B cell (primary cell): ENCODE measurements at regions of chr18 and their contacts with region 1.

Region 1: DNA sequence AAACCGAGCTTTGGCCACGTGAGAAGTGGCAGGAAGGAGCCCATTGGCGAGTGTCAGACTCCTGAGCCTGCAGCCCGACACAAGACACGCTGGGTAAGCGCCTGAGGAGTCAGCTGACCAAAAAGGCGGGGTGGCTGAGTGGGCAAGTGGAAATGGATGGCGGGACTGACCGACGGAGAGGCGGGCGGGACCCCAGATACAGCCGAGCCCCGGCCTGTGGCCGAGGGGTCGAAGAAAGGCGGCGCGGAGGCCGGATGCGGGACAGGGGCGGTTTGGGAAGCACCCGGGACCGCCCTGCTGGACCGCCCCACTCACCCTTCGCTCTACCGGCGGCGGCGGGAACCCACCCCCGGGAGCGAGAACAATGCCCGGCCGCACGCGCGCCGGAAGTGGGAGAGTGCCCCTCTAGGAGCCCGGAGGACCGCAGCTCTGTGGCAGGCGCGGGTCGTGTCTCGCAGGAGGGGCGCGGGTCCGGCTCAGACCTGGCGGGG is 22.8 kb downstream of the ZSCAN30 start:
- DNase-seq: peak; percentile 84
- ATAC-seq: peak; percentile 85
- H3K4me3 ChIP-seq: peak overlapping the region; percentile 34 to 79 (median 76)
- H3K4me3 Mint-ChIP-seq: peak overlapping the region; percentile 95
- H3K27ac ChIP-seq: peak overlapping the region; percentile 81 to 93
- H3K27ac Mint-ChIP-seq: peak overlapping the region; percentile 95
- H3K4me1 ChIP-seq: peaks cover 18 to 23% of the 10 kb centered on the region in 2 donors
- H3K4me1 Mint-ChIP-seq: peaks cover 31% of the 10 kb centered on the region
- H3K27me3 ChIP-seq: no peaks in the 10 kb centered on the region
- H3K27me3 Mint-ChIP-seq: no peaks in the 10 kb centered on the region
- CTCF ChIP-seq: no peak

Region 2: GRCh38 chr18:35240664-35241447 is 26.4 kb before region 1 on chr18 and contains the start of gene ZNF397:
- CTCF ChIA-PET with region 1: interaction called, 4 read pairs
- POLR2A ChIA-PET with region 1: interaction called, 15 read pairs
- intact Hi-C with region 1: loop called (anchors 1 kb)
- DNase-seq: peak; percentile 97
- ATAC-seq: peak; percentile 98
- H3K4me3 ChIP-seq: peak within 1 kb of the TSS; percentile 79 to 95 (median 91)
- H3K4me3 Mint-ChIP-seq: peak within 1 kb of the TSS; percentile 91
- H3K27ac ChIP-seq: peak within 1 kb of the TSS; percentile 97
- H3K27ac Mint-ChIP-seq: peak within 1 kb of the TSS; percentile 99
- H3K4me1 ChIP-seq: peaks cover 10 to 12% of the 10 kb centered on the region in 2 donors
- H3K4me1 Mint-ChIP-seq: peaks cover 29% of the 10 kb centered on the region
- H3K27me3 ChIP-seq: no peaks in the 10 kb centered on the region
- H3K27me3 Mint-ChIP-seq: no peaks in the 10 kb centered on the region
- CTCF ChIP-seq: no peak
- total RNA-seq, gene ZNF397: 63.0 and 67.2 TPM in 2 replicates

Region 3: GRCh38 chr18:35247444-35248249 is 19.6 kb before region 1 on chr18:
- CTCF ChIA-PET with region 1: interaction called, 5 read pairs
- POLR2A ChIA-PET with region 1: no interaction called
- intact Hi-C with region 1: loop called (anchors 2 kb)
- DNase-seq: peak; percentile 78
- ATAC-seq: peak; percentile 93
- H3K4me3 ChIP-seq: peak overlapping the region in 1 of 5 experiments; percentile 18
- H3K4me3 Mint-ChIP-seq: peak overlapping the region; percentile 73
- H3K27ac ChIP-seq: peak overlapping the region; percentile 0 to 66
- H3K27ac Mint-ChIP-seq: peak overlapping the region; percentile 91
- H3K4me1 ChIP-seq: peaks cover 24 to 26% of the 10 kb centered on the region in 2 donors
- H3K4me1 Mint-ChIP-seq: peaks cover 39% of the 10 kb centered on the region
- H3K27me3 ChIP-seq: no peaks in the 10 kb centered on the region
- H3K27me3 Mint-ChIP-seq: no peaks in the 10 kb centered on the region
- CTCF ChIP-seq: no peak

Region 4: GRCh38 chr18:35290073-35290735 is 23.0 kb after region 1 on chr18 and contains the start of gene ZSCAN30:
- CTCF ChIA-PET with region 1: interaction called, 9 read pairs
- POLR2A ChIA-PET with region 1: interaction called, 14 read pairs
- intact Hi-C with region 1: loop called (anchors 1 kb)
- DNase-seq: peak; percentile 97
- ATAC-seq: peak; percentile 99
- H3K4me3 ChIP-seq: peak within 1 kb of the TSS; percentile 85 to 94 (median 90)
- H3K4me3 Mint-ChIP-seq: peak within 1 kb of the TSS; percentile 100
- H3K27ac ChIP-seq: peak within 1 kb of the TSS; percentile 80 to 86
- H3K27ac Mint-ChIP-seq: peak within 1 kb of the TSS; percentile 98
- H3K4me1 ChIP-seq: peaks cover 14 to 16% of the 10 kb centered on the region in 2 donors
- H3K4me1 Mint-ChIP-seq: peaks cover 45% of the 10 kb centered on the region
- H3K27me3 ChIP-seq: no peaks in the 10 kb centered on the region
- H3K27me3 Mint-ChIP-seq: no peaks in the 10 kb centered on the region
- CTCF ChIP-seq: no peak
- total RNA-seq, gene ZSCAN30: 32.0 and 37.3 TPM in 2 replicates

Region 5: GRCh38 chr18:35355140-35355618 is 88.0 kb after region 1 on chr18:
- CTCF ChIA-PET with region 1: interaction called, 12 read pairs
- POLR2A ChIA-PET with region 1: no interaction called
- intact Hi-C with region 1: no loop called
- DNase-seq: peak; percentile 85
- ATAC-seq: peak; percentile 99
- H3K4me3 ChIP-seq: no peak overlapping the region
- H3K4me3 Mint-ChIP-seq: no peak overlapping the region
- H3K27ac ChIP-seq: no peak overlapping the region
- H3K27ac Mint-ChIP-seq: no peak overlapping the region
- H3K4me1 ChIP-seq: no peaks in the 10 kb centered on the region
- H3K4me1 Mint-ChIP-seq: no peaks in the 10 kb centered on the region
- H3K27me3 ChIP-seq: no peaks in the 10 kb centered on the region
- H3K27me3 Mint-ChIP-seq: no peaks in the 10 kb centered on the region
- CTCF ChIP-seq: peak; percentile 76

Region 6: DNA sequence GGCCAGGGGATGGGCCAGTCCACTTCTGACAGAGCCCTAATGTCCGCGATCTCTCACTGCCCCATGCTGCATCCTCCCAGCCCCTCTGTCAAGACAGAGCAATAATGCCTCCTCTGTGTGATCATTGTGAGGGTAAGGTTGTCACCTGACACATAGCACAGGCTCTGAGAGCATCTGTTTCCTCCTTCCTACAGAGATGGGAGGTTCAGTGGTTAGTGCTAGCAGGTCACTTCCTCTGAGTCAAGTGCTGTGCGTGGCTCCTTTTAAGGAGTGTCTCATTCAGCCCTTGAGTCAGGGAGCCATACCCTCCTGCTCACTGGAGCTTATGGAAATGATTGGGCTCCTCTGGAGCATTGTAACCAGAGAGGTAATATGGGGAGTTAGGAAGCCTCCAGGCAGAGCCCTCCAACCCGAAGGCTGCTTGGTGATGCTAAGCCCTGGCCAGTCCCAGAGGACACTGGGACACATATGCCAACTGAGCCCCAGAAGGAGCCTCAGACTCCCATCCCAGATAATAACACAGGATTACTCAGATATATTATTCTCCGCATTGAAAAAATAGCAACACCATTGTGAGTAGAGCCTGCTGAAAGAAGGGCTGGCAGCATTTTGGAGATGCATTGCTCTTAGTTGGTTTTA is 503.3 kb after region 1 on chr18:
- CTCF ChIA-PET with region 1: no interaction called
- POLR2A ChIA-PET with region 1: no interaction called
- intact Hi-C with region 1: no loop called
- DNase-seq: no peak
- ATAC-seq: peak; percentile 31
- H3K4me3 ChIP-seq: no peak overlapping the region
- H3K4me3 Mint-ChIP-seq: no peak overlapping the region
- H3K27ac ChIP-seq: no peak overlapping the region
- H3K27ac Mint-ChIP-seq: no peak overlapping the region
- H3K4me1 ChIP-seq: peaks cover 0 to 9% of the 10 kb centered on the region in 2 donors
- H3K4me1 Mint-ChIP-seq: peaks cover 6% of the 10 kb centered on the region
- H3K27me3 ChIP-seq: no peaks in the 10 kb centered on the region
- H3K27me3 Mint-ChIP-seq: peaks cover 13% of the 10 kb centered on the region
- CTCF ChIP-seq: no peak

Region 7: DNA sequence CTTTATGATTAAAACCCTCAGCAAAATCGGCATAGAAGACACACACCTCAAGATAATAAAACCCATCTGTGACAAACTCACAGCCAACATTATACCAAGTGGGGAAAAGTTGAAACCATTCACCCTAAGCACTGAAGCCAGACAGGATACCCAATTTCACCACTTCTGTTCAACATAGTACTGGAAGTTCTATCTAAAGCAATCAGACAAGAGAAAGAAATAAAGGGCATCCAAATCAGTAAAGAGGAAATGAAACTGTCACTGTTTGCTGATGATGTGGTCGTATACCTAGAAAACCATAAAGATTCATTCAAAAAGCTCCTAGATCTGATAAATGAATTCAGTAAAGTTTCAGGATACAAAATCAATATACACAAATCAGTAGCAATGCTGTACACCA is 816.5 kb after region 1 on chr18:
- CTCF ChIA-PET with region 1: no interaction called
- POLR2A ChIA-PET with region 1: no interaction called
- intact Hi-C with region 1: no loop called
- DNase-seq: peak; percentile 64
- ATAC-seq: peak; percentile 47
- H3K4me3 ChIP-seq: no peak overlapping the region
- H3K4me3 Mint-ChIP-seq: peak overlapping the region; percentile 29
- H3K27ac ChIP-seq: no peak overlapping the region
- H3K27ac Mint-ChIP-seq: peak overlapping the region; percentile 64
- H3K4me1 ChIP-seq: peaks cover 8 to 14% of the 10 kb centered on the region in 2 donors
- H3K4me1 Mint-ChIP-seq: peaks cover 25% of the 10 kb centered on the region
- H3K27me3 ChIP-seq: no peaks in the 10 kb centered on the region
- H3K27me3 Mint-ChIP-seq: no peaks in the 10 kb centered on the region
- CTCF ChIP-seq: no peak